ENCODE measurements at regions of chr16 and their contacts with region 1.

Region 1: DNA sequence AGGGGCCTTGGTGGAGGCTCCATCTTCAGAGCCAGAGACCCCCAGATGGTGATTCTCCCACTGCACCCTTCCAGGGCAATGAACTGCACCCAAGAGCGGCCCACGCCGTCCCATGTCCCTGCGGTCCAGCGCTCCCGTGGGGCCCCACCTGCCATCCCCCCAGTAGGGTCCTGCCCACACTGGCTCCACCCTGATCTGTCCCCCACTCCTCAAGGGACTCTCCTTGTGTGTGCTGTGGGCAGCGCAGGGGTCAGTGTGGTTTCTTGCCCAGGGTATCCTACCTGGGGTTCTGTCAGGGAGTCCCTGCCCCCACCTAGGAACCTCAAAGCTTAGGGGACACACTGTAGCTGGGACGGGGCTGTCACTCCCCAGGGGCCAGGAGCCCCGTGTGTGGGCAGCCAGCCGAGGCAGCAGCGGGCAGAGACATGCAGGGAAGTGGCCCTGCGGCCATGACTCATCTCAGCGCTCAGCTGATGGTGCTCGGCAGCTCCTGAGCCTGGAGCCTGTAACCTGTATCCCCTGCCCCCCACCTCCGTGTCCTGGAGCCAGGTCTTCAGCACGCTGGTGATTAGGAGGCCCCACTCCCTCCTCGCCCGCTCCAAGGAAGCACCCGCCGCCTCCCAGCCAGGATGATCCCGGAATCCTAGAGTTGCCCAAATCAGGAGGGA is 35.7 kb upstream of the SSTR5 start:
- DNase-seq: no peak
- ATAC-seq: peak; percentile 69 to 77; a peak in 5 of 6 replicates
- H3K4me3 ChIP-seq: no peak overlapping the region
- H3K27ac ChIP-seq: peak overlapping the region in 1 of 2 experiments; percentile 55; a peak in 3 of 6 replicates
- H3K4me1 ChIP-seq: peaks cover 10% of the 10 kb centered on the region
- CTCF ChIP-seq: no peak
- EP300 ChIP-seq: no peak
- POLR2A ChIP-seq: no peak
- RAD21 ChIP-seq: no peak

Region 2: DNA sequence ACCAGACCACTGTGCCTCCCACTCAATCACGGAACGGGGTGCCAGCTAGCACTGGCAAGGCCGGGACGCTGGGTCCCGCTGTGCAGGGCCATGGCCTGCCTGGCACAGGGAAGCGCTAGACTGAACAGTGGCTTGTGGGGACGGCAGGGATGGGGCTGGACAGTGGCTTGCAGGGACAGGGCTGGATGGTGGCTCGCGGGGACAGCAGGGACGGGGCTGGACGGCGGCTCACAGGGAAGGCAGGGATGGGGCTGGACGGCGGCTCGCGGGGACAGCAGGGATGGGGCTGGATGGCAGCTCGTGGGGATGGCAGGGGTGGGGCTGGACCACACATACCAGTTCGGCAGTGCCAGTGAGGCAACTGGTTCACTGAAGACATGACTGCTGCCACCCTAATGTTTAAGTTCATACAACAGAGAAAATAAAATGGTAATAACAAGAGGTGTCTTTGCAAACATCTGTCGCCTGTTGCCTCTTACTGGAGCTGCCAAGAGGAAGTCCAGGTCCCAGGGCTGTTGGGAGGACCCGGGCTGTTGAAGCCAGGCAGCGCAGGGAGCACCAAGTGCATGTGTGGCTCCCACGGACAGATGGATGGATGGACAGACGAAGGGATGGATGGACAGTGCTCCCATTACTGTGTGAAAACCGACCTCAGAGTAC is 98.6 kb before region 1 on chr16:
- CTCF ChIA-PET with region 1: no interaction called
- POLR2A ChIA-PET with region 1: no interaction called
- DNase-seq: no peak
- ATAC-seq: no peak
- H3K4me3 ChIP-seq: no peak overlapping the region
- H3K27ac ChIP-seq: no peak overlapping the region
- H3K4me1 ChIP-seq: no peaks in the 10 kb centered on the region
- CTCF ChIP-seq: no peak
- EP300 ChIP-seq: no peak
- POLR2A ChIP-seq: no peak
- RAD21 ChIP-seq: no peak

Region 3: GRCh38 chr16:974611-975261 is 62.1 kb before region 1 on chr16:
- CTCF ChIA-PET with region 1: no interaction called
- POLR2A ChIA-PET with region 1: no interaction called
- DNase-seq: no peak
- ATAC-seq: no peak
- H3K4me3 ChIP-seq: no peak overlapping the region
- H3K27ac ChIP-seq: no peak overlapping the region
- H3K4me1 ChIP-seq: 0 out of 3 replicates have a peak, but pooled peaks cover 3% of the 10 kb centered on the region
- CTCF ChIP-seq: no peak
- EP300 ChIP-seq: no peak
- POLR2A ChIP-seq: no peak
- RAD21 ChIP-seq: no peak

Region 4: GRCh38 chr16:1048442-1049112 is 11.7 kb after region 1 on chr16:
- CTCF ChIA-PET with region 1: interaction called, 10 read pairs
- POLR2A ChIA-PET with region 1: no interaction called
- DNase-seq: peak; percentile 68 to 69
- ATAC-seq: peak; percentile 63 to 86
- H3K4me3 ChIP-seq: 0 out of 3 replicates have a peak overlapping the region, but pooled peaks have one; percentile 8
- H3K27ac ChIP-seq: peak overlapping the region; percentile 70 to 76; a peak in 5 of 6 replicates
- H3K4me1 ChIP-seq: peaks cover 24% of the 10 kb centered on the region
- CTCF ChIP-seq: no peak
- EP300 ChIP-seq: no peak
- POLR2A ChIP-seq: no peak
- RAD21 ChIP-seq: no peak